ENCODE measurements at regions of chr11 and their contacts with region 1.

Region 1: GRCh38 chr11:36436064-36436463 is 74.0 kb downstream of the TRAF6 start:
- DNase-seq: no peak
- ATAC-seq: peak in 1 of 2 donors; percentile 36
- H3K4me3 ChIP-seq: no peak overlapping the region
- H3K27ac ChIP-seq: no peak overlapping the region
- H3K4me1 ChIP-seq: peaks cover 10% of the 10 kb centered on the region in 2 donors
- H3K27me3 ChIP-seq: no peaks in the 10 kb centered on the region
- CTCF ChIP-seq: no peak
- POLR2A ChIP-seq: no peak

Region 2: GRCh38 chr11:36316049-36316772 is 119.9 kb before region 1 on chr11:
- in situ Hi-C with region 1: no loop called
- intact Hi-C with region 1: no loop called
- DNase-seq: no peak
- ATAC-seq: no peak
- H3K4me3 ChIP-seq: no peak overlapping the region
- H3K27ac ChIP-seq: no peak overlapping the region
- H3K4me1 ChIP-seq: no peaks in the 10 kb centered on the region
- H3K27me3 ChIP-seq: no peaks in the 10 kb centered on the region
- CTCF ChIP-seq: no peak
- POLR2A ChIP-seq: no peak

Region 3: GRCh38 chr11:36376888-36377758 is 58.9 kb before region 1 on chr11:
- in situ Hi-C with region 1: no loop called
- intact Hi-C with region 1: loop called (anchors 5 kb)
- DNase-seq: peak; percentile 26 to 45
- ATAC-seq: peak; percentile 74 to 78
- H3K4me3 ChIP-seq: peak overlapping the region; percentile 56 to 86 (median 66)
- H3K27ac ChIP-seq: peak overlapping the region in 2 of 4 donors; percentile 17 to 44
- H3K4me1 ChIP-seq: peaks cover 0 to 19% of the 10 kb centered on the region in 2 donors
- H3K27me3 ChIP-seq: peaks cover 11 to 23% (median 11%) of the 10 kb centered on the region in 3 donors
- CTCF ChIP-seq: peak; percentile 14 to 66 (median 45)
- POLR2A ChIP-seq: no peak

Measured in gastrocnemius medialis (tissue), 4 donors.